Gastrocnemius medialis (tissue), 4 donors: ENCODE measurements at regions of chr4 and their contacts with region 1.

Region 1: DNA sequence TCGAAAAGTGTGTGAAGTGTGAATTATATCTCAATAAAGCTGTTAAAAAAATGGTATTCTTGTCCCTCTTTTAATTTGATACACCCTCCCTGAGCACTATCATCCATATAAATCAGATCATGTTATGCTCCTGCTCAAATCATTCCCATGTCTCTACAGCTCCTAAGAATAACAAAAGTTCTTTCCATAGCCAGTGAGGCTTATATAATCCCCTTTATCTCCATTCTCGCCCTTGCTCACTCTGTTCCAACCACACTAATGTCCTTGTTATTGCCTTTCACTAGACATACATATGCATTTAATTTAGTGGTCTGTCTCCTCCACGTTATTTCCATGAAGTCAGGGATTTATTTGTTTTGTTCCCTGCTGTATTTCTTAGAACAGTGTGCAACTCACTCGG is 10.5 kb downstream of the ZGRF1 start:
- DNase-seq: no peak
- ATAC-seq: no peak
- H3K4me3 ChIP-seq: no peak overlapping the region
- H3K27ac ChIP-seq: no peak overlapping the region
- H3K4me1 ChIP-seq: no peaks in the 10 kb centered on the region
- H3K27me3 ChIP-seq: no peaks in the 10 kb centered on the region
- CTCF ChIP-seq: no peak
- POLR2A ChIP-seq: no peak

Region 2: GRCh38 chr4:112532267-112532666 is 94.0 kb before region 1 on chr4:
- in situ Hi-C with region 1: no loop called
- intact Hi-C with region 1: no loop called
- DNase-seq: no peak
- ATAC-seq: no peak
- H3K4me3 ChIP-seq: no peak overlapping the region
- H3K27ac ChIP-seq: no peak overlapping the region
- H3K4me1 ChIP-seq: no peaks in the 10 kb centered on the region
- H3K27me3 ChIP-seq: no peaks in the 10 kb centered on the region
- CTCF ChIP-seq: no peak
- POLR2A ChIP-seq: no peak

Region 3: GRCh38 chr4:112552668-112553067 is 73.6 kb before region 1 on chr4:
- in situ Hi-C with region 1: no loop called
- intact Hi-C with region 1: no loop called
- DNase-seq: no peak
- ATAC-seq: no peak
- H3K4me3 ChIP-seq: no peak overlapping the region
- H3K27ac ChIP-seq: no peak overlapping the region
- H3K4me1 ChIP-seq: no peaks in the 10 kb centered on the region
- H3K27me3 ChIP-seq: no peaks in the 10 kb centered on the region
- CTCF ChIP-seq: no peak
- POLR2A ChIP-seq: no peak

Region 4: DNA sequence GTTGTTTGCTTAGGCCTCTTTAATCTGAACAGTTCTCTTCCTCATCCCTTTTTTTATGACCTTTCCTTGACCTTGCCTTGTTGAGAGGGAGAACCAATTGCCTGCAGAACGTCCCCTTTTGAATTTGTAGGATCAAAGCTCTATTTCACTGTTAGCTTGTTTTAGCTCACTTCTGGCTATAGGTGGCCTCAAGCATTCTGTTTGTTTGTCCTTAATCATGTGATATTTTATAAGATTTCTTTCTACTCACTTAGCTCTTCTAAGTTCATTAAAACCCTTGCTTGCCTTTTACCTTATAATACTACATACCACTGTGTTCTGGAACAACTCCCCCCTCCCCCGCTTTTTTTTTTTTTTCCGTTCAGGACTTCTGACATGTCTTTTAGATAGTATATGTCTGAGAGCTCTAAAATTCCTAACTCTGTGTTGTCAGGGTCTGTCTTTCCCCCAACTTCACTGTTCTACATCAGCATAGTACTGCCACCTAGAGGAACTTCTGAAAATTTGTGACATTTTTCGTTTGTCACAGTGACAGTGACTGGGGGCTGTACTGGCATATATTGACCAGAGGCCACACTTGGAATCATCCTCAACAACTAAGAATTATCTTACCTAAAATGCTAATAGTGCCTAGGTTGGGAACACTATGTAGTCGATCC is 139.2 kb after region 1 on chr4:
- in situ Hi-C with region 1: loop called in 3 of 4 experiments (anchors 5 kb)
- intact Hi-C with region 1: no loop called
- DNase-seq: no peak
- ATAC-seq: peak; percentile 45 to 75
- H3K4me3 ChIP-seq: no peak overlapping the region
- H3K27ac ChIP-seq: no peak overlapping the region
- H3K4me1 ChIP-seq: no peaks in the 10 kb centered on the region
- H3K27me3 ChIP-seq: no peaks in the 10 kb centered on the region
- CTCF ChIP-seq: peak in 4 of 5 experiments; percentile 13 to 59 (median 46)
- POLR2A ChIP-seq: no peak